Dorsolateral prefrontal cortex (tissue), 120 donors: ENCODE measurements at regions of chr3 and their contacts with region 1.

Region 1: GRCh38 chr3:23805633-23806533 is at the start of gene UBE2E1:
- DNase-seq: peak; percentile 42 to 73 (median 63)
- H3K4me3 ChIP-seq: peak within 1 kb of the TSS; percentile 60 to 94 (median 86)
- H3K27ac ChIP-seq: peak within 1 kb of the TSS; percentile 23 to 96 (median 89)
- H3K27me3 ChIP-seq: no peaks in the 10 kb centered on the region
- CTCF ChIP-seq: peak in 1 of 56 donors; percentile 8
- total RNA-seq, gene UBE2E1: 49.8 to 113 (median 77.4) TPM

Region 2: DNA sequence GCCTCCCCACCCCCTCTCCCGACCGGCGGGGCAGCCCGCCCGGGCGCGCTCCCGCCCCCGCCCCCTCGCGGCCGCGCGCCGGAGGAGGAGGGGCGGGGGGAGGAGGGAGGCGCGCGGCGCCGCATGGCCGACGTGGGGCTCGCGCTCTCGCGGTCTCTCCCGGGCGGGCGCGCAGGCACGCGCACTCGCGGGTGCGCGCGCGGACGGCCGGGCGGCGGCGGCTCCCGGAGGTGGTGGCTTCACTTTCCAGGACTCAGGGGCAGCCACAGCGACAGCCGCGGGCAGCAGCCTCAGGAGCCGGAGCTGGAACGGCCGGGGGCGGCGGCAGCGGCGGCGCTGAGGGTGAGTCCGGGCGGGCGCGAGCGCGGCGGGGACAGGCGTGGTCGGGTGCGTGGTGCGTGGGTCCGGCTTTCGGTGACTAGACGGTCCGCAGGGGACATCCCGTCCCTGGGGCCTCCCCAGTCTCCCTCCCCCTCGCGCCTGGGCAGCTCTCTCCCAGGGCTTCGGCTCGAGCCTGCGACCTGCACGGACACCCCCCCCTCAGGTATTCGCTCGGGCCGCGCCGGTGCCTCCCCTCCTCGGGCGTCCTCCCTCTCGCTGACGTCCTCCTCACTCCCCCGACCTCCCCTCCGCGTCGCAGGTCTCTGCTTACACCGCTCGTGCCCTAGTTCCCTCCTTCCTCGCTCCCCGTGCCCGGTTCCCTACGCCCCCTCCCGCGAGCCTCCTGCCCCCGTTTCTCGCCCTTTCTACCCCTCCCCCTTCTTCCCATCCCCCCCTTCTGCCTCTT is 602.8 kb before region 1 on chr3 and contains the start of gene UBE2E2:
- intact Hi-C with region 1: loop called in 1 of 2 experiments (anchors 5 kb)
- DNase-seq: peak; percentile 41 to 83 (median 62)
- H3K4me3 ChIP-seq: peak within 1 kb of the TSS; percentile 66 to 99 (median 87)
- H3K27ac ChIP-seq: peak within 1 kb of the TSS; percentile 37 to 96 (median 88)
- H3K27me3 ChIP-seq: no peaks in the 10 kb centered on the region
- CTCF ChIP-seq: peak in 2 of 56 donors; percentile 13 to 34
- total RNA-seq, gene UBE2E2: 50.5 to 141 (median 96.9) TPM

Region 3: GRCh38 chr3:23239211-23240068 is 566.4 kb before region 1 on chr3:
- intact Hi-C with region 1: loop called in 1 of 2 experiments (anchors 10 kb)
- DNase-seq: no peak
- H3K4me3 ChIP-seq: peak overlapping the region in 1 of 59 donors; percentile 5
- H3K27ac ChIP-seq: peak overlapping the region in 55 of 59 donors; percentile 6 to 94 (median 80)
- H3K27me3 ChIP-seq: no peaks in the 10 kb centered on the region
- CTCF ChIP-seq: no peak

Region 4: DNA sequence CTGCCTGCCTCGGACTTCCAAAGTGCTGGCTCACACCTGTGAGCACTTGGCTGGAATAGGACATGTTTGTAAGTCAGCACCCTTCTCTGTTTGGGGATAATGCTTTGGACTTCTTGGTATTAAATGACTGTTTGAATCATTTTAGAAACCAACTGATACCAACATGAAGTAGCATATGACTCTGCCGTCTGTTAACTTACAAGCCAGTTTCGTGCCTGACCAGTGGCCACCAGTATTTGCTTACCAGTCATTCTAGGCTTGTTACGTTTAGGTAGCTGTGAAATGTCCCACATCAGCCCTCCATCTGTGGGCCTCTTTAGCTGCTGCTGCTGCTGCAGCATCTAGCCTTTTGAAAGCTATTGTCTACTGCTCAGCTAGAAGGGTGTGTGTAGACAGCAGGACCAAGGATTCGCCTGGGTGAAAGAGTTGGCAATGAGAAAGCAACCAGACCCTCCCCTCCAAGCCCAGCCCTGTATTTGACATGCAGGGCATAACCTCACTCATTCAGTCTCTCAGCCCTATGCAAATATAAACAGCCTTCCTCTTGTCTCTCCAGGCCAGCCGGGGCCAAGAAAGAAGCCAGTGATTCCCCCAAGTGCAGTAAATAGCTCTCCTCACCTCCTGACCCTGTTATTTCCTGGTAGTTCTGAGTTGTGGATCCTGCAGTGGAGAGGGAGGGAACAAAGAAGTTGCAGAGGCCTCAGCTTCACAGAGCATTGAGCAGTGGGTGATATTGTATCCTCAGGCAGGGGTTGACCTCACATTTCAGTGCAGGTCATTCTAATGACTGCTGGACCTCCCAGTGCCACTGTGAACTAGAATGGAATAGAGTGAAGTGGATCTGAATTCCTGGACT is 59.9 kb after region 1 on chr3:
- intact Hi-C with region 1: loop called in 1 of 2 experiments (anchors 5 kb)
- DNase-seq: peak in 5 of 10 donors; percentile 14 to 56 (median 50)
- H3K4me3 ChIP-seq: peak overlapping the region in 2 of 59 donors; percentile 15 to 23
- H3K27ac ChIP-seq: peak overlapping the region in 57 of 59 donors; percentile 8 to 88 (median 70)
- H3K27me3 ChIP-seq: no peaks in the 10 kb centered on the region
- CTCF ChIP-seq: no peak

Region 5: DNA sequence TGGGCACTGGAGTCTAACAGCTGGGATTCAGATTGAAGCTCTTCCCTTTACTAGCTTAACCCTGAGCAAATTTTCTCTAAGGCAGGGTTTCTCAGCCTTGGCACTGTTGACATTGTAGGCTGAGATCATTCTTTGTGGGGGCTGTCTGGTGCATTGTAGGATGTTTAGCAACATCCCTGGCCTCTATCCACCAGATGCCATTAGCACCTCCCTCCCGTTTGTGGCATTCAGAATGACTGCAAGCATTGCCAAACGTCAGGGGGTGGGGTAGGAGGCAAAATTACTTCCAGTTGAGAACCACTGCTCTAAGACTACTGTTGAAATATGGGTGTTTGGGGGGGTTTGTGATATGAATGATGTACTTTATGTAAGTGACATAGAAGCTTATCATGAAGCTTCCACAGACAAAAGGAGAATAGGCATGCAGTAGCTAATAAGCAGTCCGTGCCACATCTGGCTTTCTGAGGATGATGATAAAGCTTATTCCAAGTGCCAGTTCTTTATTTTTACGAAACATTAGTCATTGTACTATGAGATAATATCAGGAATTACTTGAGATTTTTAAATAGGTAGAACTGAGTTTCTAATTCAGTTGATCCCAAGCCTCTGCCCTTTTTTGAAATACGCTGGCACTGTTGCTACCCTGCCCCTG is 71.6 kb after region 1 on chr3:
- intact Hi-C with region 1: no loop called
- DNase-seq: no peak
- H3K4me3 ChIP-seq: no peak overlapping the region
- H3K27ac ChIP-seq: peak overlapping the region in 23 of 59 donors; percentile 3 to 52 (median 17)
- H3K27me3 ChIP-seq: no peaks in the 10 kb centered on the region
- CTCF ChIP-seq: no peak

Region 6: GRCh38 chr3:23916886-23917678 is 111.2 kb after region 1 on chr3 and contains the starts of genes NKIRAS1 and RPL15:
- intact Hi-C with region 1: loop called in 1 of 2 experiments (anchors 5 kb)
- DNase-seq: peak; percentile 89 to 97 (median 96)
- H3K4me3 ChIP-seq: peak within 1 kb of the TSS; percentile 64 to 99 (median 91)
- H3K27ac ChIP-seq: peak within 1 kb of the TSS; percentile 58 to 98 (median 92)
- H3K27me3 ChIP-seq: no peaks in the 10 kb centered on the region
- CTCF ChIP-seq: peak in 55 of 56 donors; percentile 35 to 79 (median 64)
- total RNA-seq, gene NKIRAS1: 22.5 to 64.8 (median 46.6) TPM
- total RNA-seq, gene RPL15: 579 to 1,036 (median 800) TPM

Region 7: GRCh38 chr3:24215502-24215901 is 409.6 kb after region 1 on chr3:
- intact Hi-C with region 1: no loop called
- DNase-seq: no peak
- H3K4me3 ChIP-seq: no peak overlapping the region
- H3K27ac ChIP-seq: peak overlapping the region in 1 of 59 donors; percentile 20
- H3K27me3 ChIP-seq: no peaks in the 10 kb centered on the region
- CTCF ChIP-seq: no peak